ENCODE measurements at regions of chr1 and their contacts with region 1.

Region 1: GRCh38 chr1:157496121-157496526 is 56.2 kb downstream of the FCRL5 start:
- DNase-seq: peak in 1 of 2 donors; percentile 67
- ATAC-seq: peak; percentile 78 to 90 (median 89)
- H3K4me3 ChIP-seq: no peak overlapping the region
- H3K4me3 Mint-ChIP-seq: no peak overlapping the region
- H3K27ac ChIP-seq: no peak overlapping the region
- H3K27ac Mint-ChIP-seq: no peak overlapping the region
- H3K4me1 ChIP-seq: no peaks in the 10 kb centered on the region
- H3K4me1 Mint-ChIP-seq: no peaks in the 10 kb centered on the region
- H3K27me3 ChIP-seq: no peaks in the 10 kb centered on the region
- H3K27me3 Mint-ChIP-seq: peaks cover 19 to 33% of the 10 kb centered on the region in 2 donors
- CTCF ChIP-seq: peak; percentile 89

Region 2: DNA sequence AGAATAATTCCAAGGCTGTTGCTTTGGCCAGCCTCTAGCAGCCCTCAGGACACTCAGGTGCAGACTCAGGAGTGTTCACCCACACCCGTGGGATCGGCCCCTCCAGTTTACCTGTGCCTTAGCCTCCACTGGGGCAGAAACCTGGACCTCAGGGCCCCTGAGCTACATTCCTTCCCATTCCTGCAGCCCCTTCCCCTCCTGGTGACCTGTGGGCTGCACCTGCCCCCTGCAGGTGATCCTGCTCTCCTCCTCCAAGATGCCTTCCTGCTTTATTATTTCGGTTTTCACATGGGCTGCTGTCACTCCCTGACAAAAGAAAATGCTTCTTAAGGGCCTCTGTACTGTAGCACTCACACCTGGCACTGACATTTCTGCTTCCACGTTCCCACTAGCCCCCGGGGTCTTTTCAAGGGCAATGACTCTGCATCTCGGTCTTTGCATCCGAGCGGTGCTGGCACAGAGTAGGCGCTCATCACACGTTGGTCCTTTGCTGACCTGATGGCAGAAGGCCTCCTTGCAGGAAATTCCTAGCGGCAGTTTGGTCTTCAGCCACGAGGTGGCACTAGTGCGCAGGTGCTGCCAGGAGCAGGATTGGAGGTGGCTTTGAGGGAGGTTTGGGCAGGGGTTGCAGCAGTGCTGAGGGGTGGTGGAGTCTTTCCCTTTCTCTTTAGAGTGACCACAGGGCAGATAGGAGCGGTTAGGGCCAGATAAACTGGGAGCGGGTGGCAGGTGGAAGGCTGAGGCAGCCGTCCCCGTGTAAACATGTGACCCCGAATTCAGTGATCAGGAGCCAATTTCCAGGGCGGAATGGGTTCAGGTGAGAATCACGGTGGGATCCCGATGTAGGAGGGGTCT is 332.6 kb before region 1 on chr1:
- intact Hi-C with region 1: loop called (anchors 1 kb)
- DNase-seq: peak; percentile 66 to 80
- ATAC-seq: peak; percentile 54 to 81 (median 76)
- H3K4me3 ChIP-seq: no peak overlapping the region
- H3K4me3 Mint-ChIP-seq: no peak overlapping the region
- H3K27ac ChIP-seq: no peak overlapping the region
- H3K27ac Mint-ChIP-seq: no peak overlapping the region
- H3K4me1 ChIP-seq: no peaks in the 10 kb centered on the region
- H3K4me1 Mint-ChIP-seq: peaks cover 7% of the 10 kb centered on the region in 2 donors
- H3K27me3 ChIP-seq: peaks cover 3% of the 10 kb centered on the region
- H3K27me3 Mint-ChIP-seq: peaks cover 13 to 16% of the 10 kb centered on the region in 2 donors
- CTCF ChIP-seq: peak; percentile 80

Region 3: GRCh38 chr1:157193702-157194391 is 302.3 kb before region 1 on chr1:
- intact Hi-C with region 1: loop called (anchors 2 kb)
- DNase-seq: peak; percentile 49 to 51
- ATAC-seq: peak in 1 of 3 donors; percentile 41
- H3K4me3 ChIP-seq: no peak overlapping the region
- H3K4me3 Mint-ChIP-seq: no peak overlapping the region
- H3K27ac ChIP-seq: no peak overlapping the region
- H3K27ac Mint-ChIP-seq: no peak overlapping the region
- H3K4me1 ChIP-seq: no peaks in the 10 kb centered on the region
- H3K4me1 Mint-ChIP-seq: peaks cover 5 to 13% of the 10 kb centered on the region in 2 donors
- H3K27me3 ChIP-seq: no peaks in the 10 kb centered on the region
- H3K27me3 Mint-ChIP-seq: peaks cover 35 to 48% of the 10 kb centered on the region in 2 donors
- CTCF ChIP-seq: peak; percentile 71

Region 4: GRCh38 chr1:157448636-157449035 is 47.5 kb before region 1 on chr1:
- intact Hi-C with region 1: no loop called
- DNase-seq: no peak
- ATAC-seq: no peak
- H3K4me3 ChIP-seq: no peak overlapping the region
- H3K4me3 Mint-ChIP-seq: no peak overlapping the region
- H3K27ac ChIP-seq: no peak overlapping the region
- H3K27ac Mint-ChIP-seq: no peak overlapping the region
- H3K4me1 ChIP-seq: no peaks in the 10 kb centered on the region
- H3K4me1 Mint-ChIP-seq: peaks cover 6 to 13% of the 10 kb centered on the region in 2 donors
- H3K27me3 ChIP-seq: no peaks in the 10 kb centered on the region
- H3K27me3 Mint-ChIP-seq: no peaks in the 10 kb centered on the region
- CTCF ChIP-seq: no peak

Measured in natural killer cell (primary cell).